Common myeloid progenitor, CD34-positive (primary cell): ENCODE measurements at regions of chr13 and their contacts with region 1.

Region 1: GRCh38 chr13:99200432-99201167 is at the start of gene UBAC2:
- DNase-seq: peak; percentile 95 to 97 (median 96)
- H3K4me3 ChIP-seq: peak within 1 kb of the TSS; percentile 71 to 96 (median 89)
- H3K27ac ChIP-seq: peak within 1 kb of the TSS; percentile 90 to 97
- H3K4me1 ChIP-seq: peaks cover 16 to 36% (median 27%) of the 10 kb centered on the region in 4 experiments
- H3K27me3 ChIP-seq: no peaks in the 10 kb centered on the region

Region 2: GRCh38 chr13:99176309-99177276 is 24.0 kb before region 1 on chr13:
- CTCF ChIA-PET with region 1: interaction called, 15 read pairs
- POLR2A ChIA-PET with region 1: no interaction called
- DNase-seq: peak; percentile 60 to 78 (median 71)
- H3K4me3 ChIP-seq: peak overlapping the region in 2 of 7 experiments; percentile 44 to 46
- H3K27ac ChIP-seq: no peak overlapping the region
- H3K4me1 ChIP-seq: peaks cover 0 to 6% (median 4%) of the 10 kb centered on the region in 4 experiments
- H3K27me3 ChIP-seq: peaks cover 0 to 18% (median 5%) of the 10 kb centered on the region in 5 experiments

Region 3: DNA sequence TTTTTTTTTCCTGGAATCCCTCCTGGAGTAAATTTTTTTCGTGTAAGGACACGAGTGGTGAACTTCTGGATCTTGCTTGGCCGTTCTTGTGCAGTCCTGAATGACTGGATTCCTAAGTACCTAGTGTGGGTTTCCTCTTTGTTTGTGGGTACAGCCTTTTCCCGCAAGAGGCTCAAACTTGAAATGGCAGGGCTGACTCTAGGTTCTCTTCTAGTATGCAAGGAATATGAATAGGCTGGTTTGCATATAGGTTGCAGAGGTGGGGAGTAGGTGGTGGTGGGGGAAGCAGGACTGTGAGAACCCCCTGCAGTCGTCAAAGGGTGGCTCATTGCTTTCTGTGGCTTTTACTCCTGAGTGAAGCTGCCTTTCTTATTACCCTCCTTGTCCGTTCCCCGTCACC is 13.6 kb after region 1 on chr13:
- CTCF ChIA-PET with region 1: interaction called, 11 read pairs
- POLR2A ChIA-PET with region 1: interaction called, 5 read pairs
- DNase-seq: peak in 2 of 3 donors; percentile 43 to 54
- H3K4me3 ChIP-seq: no peak overlapping the region
- H3K27ac ChIP-seq: no peak overlapping the region
- H3K4me1 ChIP-seq: peaks cover 4 to 33% (median 23%) of the 10 kb centered on the region in 4 experiments
- H3K27me3 ChIP-seq: no peaks in the 10 kb centered on the region

Region 4: DNA sequence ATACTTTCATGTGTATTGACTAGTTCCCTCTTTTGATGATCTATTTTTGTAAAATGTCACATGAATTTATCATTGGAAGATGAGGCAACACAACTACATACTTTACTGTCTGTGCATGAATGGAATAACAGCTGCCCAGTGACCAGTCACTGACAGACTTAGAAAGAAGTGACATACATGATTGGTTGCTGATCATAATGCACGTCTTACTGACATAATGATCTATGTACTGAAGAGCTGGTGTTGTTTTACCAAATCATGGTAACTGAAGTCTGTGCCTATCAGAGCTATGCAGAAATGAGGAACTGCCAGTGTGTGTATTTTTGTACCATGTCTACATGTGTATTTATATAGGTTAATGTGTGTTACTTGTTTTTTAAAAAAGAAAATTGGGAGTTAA is 31.1 kb after region 1 on chr13:
- CTCF ChIA-PET with region 1: interaction called, 25 read pairs
- POLR2A ChIA-PET with region 1: interaction called, 4 read pairs
- DNase-seq: peak; percentile 36 to 92 (median 82)
- H3K4me3 ChIP-seq: peak overlapping the region in 1 of 7 experiments; percentile 28
- H3K27ac ChIP-seq: peak overlapping the region in 1 of 2 experiments; percentile 20
- H3K4me1 ChIP-seq: peaks cover 10 to 57% (median 39%) of the 10 kb centered on the region in 4 experiments
- H3K27me3 ChIP-seq: no peaks in the 10 kb centered on the region

Region 5: GRCh38 chr13:99237981-99238662 is 37.5 kb after region 1 on chr13:
- CTCF ChIA-PET with region 1: interaction called, 25 read pairs
- POLR2A ChIA-PET with region 1: no interaction called
- DNase-seq: no peak
- H3K4me3 ChIP-seq: peak overlapping the region in 5 of 7 experiments; percentile 15 to 71 (median 43)
- H3K27ac ChIP-seq: peak overlapping the region in 1 of 2 experiments; percentile 81
- H3K4me1 ChIP-seq: peaks cover 8 to 20% (median 14%) of the 10 kb centered on the region in 4 experiments
- H3K27me3 ChIP-seq: no peaks in the 10 kb centered on the region